Natural killer cell (primary cell): ENCODE measurements at regions of chr14 and their contacts with region 1.

Region 1: GRCh38 chr14:90235179-90235976 is 21.0 kb upstream of the PSMC1 start:
- DNase-seq: peak; percentile 53 to 69
- ATAC-seq: peak; percentile 75 to 88 (median 82)
- H3K4me3 ChIP-seq: no peak overlapping the region
- H3K4me3 Mint-ChIP-seq: no peak overlapping the region
- H3K27ac ChIP-seq: no peak overlapping the region
- H3K27ac Mint-ChIP-seq: no peak overlapping the region
- H3K4me1 ChIP-seq: peaks cover 5% of the 10 kb centered on the region
- H3K4me1 Mint-ChIP-seq: no peaks in the 10 kb centered on the region
- H3K27me3 ChIP-seq: peaks cover 4% of the 10 kb centered on the region
- H3K27me3 Mint-ChIP-seq: peaks cover 18 to 22% of the 10 kb centered on the region in 2 donors
- CTCF ChIP-seq: peak; percentile 92

Region 2: GRCh38 chr14:89027097-89027740 is 1208.2 kb before region 1 on chr14:
- intact Hi-C with region 1: loop called (anchors 10 kb)
- DNase-seq: peak; percentile 60 to 80
- ATAC-seq: peak; percentile 86 to 93 (median 91)
- H3K4me3 ChIP-seq: peak overlapping the region; percentile 38
- H3K4me3 Mint-ChIP-seq: peak overlapping the region; percentile 56
- H3K27ac ChIP-seq: no peak overlapping the region
- H3K27ac Mint-ChIP-seq: no peak overlapping the region
- H3K4me1 ChIP-seq: peaks cover 14% of the 10 kb centered on the region
- H3K4me1 Mint-ChIP-seq: no peaks in the 10 kb centered on the region
- H3K27me3 ChIP-seq: peaks cover 25% of the 10 kb centered on the region
- H3K27me3 Mint-ChIP-seq: peaks cover 54 to 62% of the 10 kb centered on the region in 2 donors
- CTCF ChIP-seq: peak; percentile 74

Region 3: GRCh38 chr14:89936658-89937185 is 298.7 kb before region 1 on chr14:
- intact Hi-C with region 1: loop called (anchors 1 kb)
- DNase-seq: no peak
- ATAC-seq: no peak
- H3K4me3 ChIP-seq: no peak overlapping the region
- H3K4me3 Mint-ChIP-seq: no peak overlapping the region
- H3K27ac ChIP-seq: no peak overlapping the region
- H3K27ac Mint-ChIP-seq: no peak overlapping the region
- H3K4me1 ChIP-seq: no peaks in the 10 kb centered on the region
- H3K4me1 Mint-ChIP-seq: no peaks in the 10 kb centered on the region
- H3K27me3 ChIP-seq: no peaks in the 10 kb centered on the region
- H3K27me3 Mint-ChIP-seq: no peaks in the 10 kb centered on the region
- CTCF ChIP-seq: no peak

Region 4: GRCh38 chr14:89973234-89973823 is 262.0 kb before region 1 on chr14:
- intact Hi-C with region 1: loop called (anchors 10 kb)
- DNase-seq: peak; percentile 30 to 68
- ATAC-seq: peak; percentile 62 to 66 (median 65)
- H3K4me3 ChIP-seq: no peak overlapping the region
- H3K4me3 Mint-ChIP-seq: no peak overlapping the region
- H3K27ac ChIP-seq: no peak overlapping the region
- H3K27ac Mint-ChIP-seq: no peak overlapping the region
- H3K4me1 ChIP-seq: no peaks in the 10 kb centered on the region
- H3K4me1 Mint-ChIP-seq: peaks cover 0 to 4% of the 10 kb centered on the region in 2 donors
- H3K27me3 ChIP-seq: no peaks in the 10 kb centered on the region
- H3K27me3 Mint-ChIP-seq: no peaks in the 10 kb centered on the region
- CTCF ChIP-seq: peak; percentile 79